Ascending aorta (tissue), 2 donors: ENCODE measurements at regions of chr4 and their contacts with region 1.

Region 1: GRCh38 chr4:47485047-47485692 is at the start of gene ATP10D:
- DNase-seq: peak; percentile 86 to 97
- H3K4me3 ChIP-seq: peak within 1 kb of the TSS; percentile 67 to 71
- H3K27ac ChIP-seq: peak within 1 kb of the TSS; percentile 89 to 90
- H3K4me1 ChIP-seq: peaks cover 0 to 13% of the 10 kb centered on the region in 2 donors
- H3K27me3 ChIP-seq: no peaks in the 10 kb centered on the region
- CTCF ChIP-seq: peak in 1 of 3 experiments; percentile 12
- total RNA-seq, gene ATP10D: 22.1 TPM

Region 2: GRCh38 chr4:47519239-47519883 is 34.2 kb after region 1 on chr4:
- intact Hi-C with region 1: loop called (anchors 1 kb)
- DNase-seq: no peak
- H3K4me3 ChIP-seq: no peak overlapping the region
- H3K27ac ChIP-seq: peak overlapping the region in 1 of 2 donors; percentile 24
- H3K4me1 ChIP-seq: peaks cover 0 to under 1% of the 10 kb centered on the region in 2 donors
- H3K27me3 ChIP-seq: no peaks in the 10 kb centered on the region
- CTCF ChIP-seq: no peak